CD4-positive, alpha-beta T cell (primary cell): ENCODE measurements at regions of chr2 and their contacts with region 1.

Region 1: DNA sequence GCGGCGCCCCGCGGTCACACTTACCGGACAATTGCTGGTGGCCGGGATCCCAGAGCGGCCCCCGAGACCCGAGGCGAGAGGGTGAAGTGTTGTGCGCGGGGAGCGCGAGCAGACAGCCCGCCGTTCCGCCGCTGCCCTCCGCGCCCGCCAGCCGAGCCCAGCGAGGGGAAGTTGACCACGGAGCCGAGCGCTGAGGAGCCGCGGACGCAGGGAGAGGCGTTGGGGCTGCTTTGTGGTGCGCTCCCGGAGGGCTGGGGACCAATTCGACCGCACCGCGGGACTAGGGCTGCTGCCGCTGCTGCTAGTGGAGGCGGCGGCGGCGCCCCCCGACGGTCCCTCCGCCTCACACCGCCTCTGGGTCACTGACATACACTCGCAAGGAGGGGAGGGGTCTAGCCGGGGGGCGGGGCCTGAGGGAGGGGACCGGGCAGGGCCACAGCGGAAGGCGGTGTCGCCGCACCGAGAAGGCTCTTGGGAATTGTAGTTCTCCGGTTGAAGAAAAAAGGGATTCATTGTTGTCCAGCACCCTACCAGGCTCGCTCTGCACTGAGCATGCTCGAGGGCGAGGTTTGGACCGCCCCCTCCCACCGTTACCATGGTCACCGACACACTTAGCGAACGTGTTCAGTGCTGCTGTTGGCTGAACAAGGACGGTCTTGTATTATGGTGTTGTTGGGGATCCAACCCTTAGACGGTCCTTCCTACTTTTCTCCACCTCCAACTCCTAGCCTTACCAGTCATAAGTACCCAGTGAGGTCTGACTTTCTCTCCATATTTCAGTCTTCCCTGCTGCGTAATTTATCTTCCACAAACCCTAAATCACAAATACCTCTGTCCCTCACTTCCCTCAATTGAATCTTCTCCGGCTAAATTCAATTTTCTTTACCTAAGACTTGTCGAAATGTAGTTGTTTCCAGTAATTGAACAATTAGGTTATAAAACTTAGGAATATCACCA is at the start of gene PELI1:
- DNase-seq: peak; percentile 87 to 99 (median 92)
- ATAC-seq: peak; percentile 91
- H3K4me3 ChIP-seq: peak within 1 kb of the TSS; percentile 77
- H3K4me3 Mint-ChIP-seq: peak within 1 kb of the TSS; percentile 95
- H3K27ac ChIP-seq: peak within 1 kb of the TSS; percentile 64 to 90
- H3K27ac Mint-ChIP-seq: peak within 1 kb of the TSS; percentile 96
- H3K4me1 ChIP-seq: peaks cover 15% of the 10 kb centered on the region
- H3K4me1 Mint-ChIP-seq: peaks cover 36% of the 10 kb centered on the region
- H3K27me3 ChIP-seq: no peaks in the 10 kb centered on the region
- H3K27me3 Mint-ChIP-seq: no peaks in the 10 kb centered on the region
- CTCF ChIP-seq: peak; percentile 13
- total RNA-seq, gene PELI1: 257 to 274 TPM

Region 2: DNA sequence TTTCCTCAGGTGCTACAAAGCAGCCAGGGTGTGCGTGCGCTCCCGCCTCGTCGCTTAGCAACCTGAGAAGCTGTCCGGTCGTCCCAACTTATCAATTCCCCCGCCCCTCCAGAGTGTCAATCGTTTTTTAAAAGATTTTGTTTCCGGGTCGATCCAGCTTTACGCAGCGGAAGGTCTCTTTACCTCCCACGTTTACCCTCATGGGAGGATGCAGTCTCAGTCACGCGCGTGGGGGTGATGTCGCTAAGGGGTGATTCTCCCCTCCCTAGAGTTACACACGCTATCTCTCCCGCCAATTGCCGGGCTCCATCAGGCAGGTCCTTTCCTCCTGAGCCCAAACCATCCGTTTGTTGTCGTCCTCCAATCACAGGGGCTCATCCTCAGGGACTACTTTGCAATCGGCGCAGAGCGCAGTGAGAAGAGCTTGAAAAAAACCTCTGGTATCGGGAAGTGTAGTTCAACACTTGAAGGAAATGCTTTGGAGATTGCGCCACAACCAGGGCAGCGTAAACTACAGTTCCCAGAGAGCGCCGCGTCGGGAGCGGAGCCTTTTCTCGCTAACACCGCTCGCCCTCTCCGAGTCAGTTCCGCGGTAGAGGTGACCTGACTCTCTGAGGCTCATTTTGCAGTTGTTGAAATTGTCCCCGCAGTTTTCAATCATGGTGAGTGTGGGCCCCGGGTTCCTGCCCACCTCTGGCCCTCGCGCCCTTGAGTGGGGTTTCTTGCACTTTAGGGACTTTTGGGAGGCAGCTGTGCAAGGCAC is 555.8 kb before region 1 on chr2 and contains the starts of genes MDH1 and WDPCP:
- CTCF ChIA-PET with region 1: no interaction called
- POLR2A ChIA-PET with region 1: no interaction called
- intact Hi-C with region 1: loop called in 1 of 2 experiments (anchors 5 kb)
- DNase-seq: peak; percentile 86 to 99 (median 88)
- ATAC-seq: peak; percentile 86
- H3K4me3 ChIP-seq: peak within 1 kb of the TSS; percentile 96
- H3K4me3 Mint-ChIP-seq: peak within 1 kb of the TSS; percentile 93
- H3K27ac ChIP-seq: peak within 1 kb of the TSS; percentile 76 to 95
- H3K27ac Mint-ChIP-seq: peak within 1 kb of the TSS; percentile 87
- H3K4me1 ChIP-seq: peaks cover 19% of the 10 kb centered on the region
- H3K4me1 Mint-ChIP-seq: peaks cover 58% of the 10 kb centered on the region
- H3K27me3 ChIP-seq: no peaks in the 10 kb centered on the region
- H3K27me3 Mint-ChIP-seq: no peaks in the 10 kb centered on the region
- CTCF ChIP-seq: no peak
- total RNA-seq, gene MDH1: 96.3 to 97.6 TPM
- total RNA-seq, gene WDPCP: 8.7 to 9.9 TPM

Region 3: GRCh38 chr2:64101141-64101591 is 43.2 kb before region 1 on chr2:
- CTCF ChIA-PET with region 1: interaction called, 6 read pairs
- POLR2A ChIA-PET with region 1: interaction called, 9 read pairs
- intact Hi-C with region 1: loop called (anchors 2 to 5 kb)
- DNase-seq: peak in 3 of 14 experiments; percentile 21 to 63 (median 30)
- ATAC-seq: peak; percentile 49
- H3K4me3 ChIP-seq: no peak overlapping the region
- H3K4me3 Mint-ChIP-seq: peak overlapping the region; percentile 35
- H3K27ac ChIP-seq: peak overlapping the region in 1 of 2 donors; percentile 56
- H3K27ac Mint-ChIP-seq: peak overlapping the region; percentile 69
- H3K4me1 ChIP-seq: peaks cover 9% of the 10 kb centered on the region
- H3K4me1 Mint-ChIP-seq: peaks cover 51% of the 10 kb centered on the region
- H3K27me3 ChIP-seq: no peaks in the 10 kb centered on the region
- H3K27me3 Mint-ChIP-seq: no peaks in the 10 kb centered on the region
- CTCF ChIP-seq: no peak

Region 4: DNA sequence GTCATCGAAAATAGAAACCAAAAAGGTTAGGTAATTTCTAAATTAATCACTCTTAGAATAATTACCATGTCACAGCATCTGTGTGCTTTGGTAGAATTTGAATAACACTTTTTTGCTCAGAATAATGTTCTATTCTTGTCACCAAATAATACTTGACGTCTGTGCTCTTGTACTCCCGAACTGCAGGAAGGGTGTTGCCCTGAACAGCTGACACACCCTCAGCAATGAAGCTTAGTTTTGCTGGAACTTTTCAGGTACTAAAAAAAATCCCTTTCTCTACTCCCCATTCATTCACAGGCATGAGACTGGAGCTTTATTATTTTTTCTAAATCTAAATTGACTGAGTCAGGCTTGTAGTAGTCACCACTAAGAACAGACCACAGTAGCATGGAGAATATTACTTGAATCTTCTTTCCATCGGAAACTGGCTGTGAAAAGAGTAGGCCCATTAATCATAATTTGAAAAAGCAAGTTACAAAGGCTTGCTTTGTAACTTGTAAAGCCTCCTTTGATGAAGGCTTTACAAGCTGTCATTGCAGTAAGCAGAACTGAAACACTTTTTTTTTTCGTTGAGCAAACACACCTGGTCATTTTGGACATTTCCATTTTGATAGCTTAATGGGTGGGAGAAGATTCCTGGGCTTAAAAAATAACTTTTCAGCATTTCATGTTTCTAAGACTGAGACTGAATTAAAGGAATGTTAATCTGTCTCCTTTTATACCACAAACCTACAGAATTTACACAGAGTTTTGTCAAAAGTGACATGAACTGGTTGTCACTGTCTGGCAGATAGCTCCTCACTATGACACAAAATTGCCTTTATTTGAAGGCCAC is 70.2 kb after region 1 on chr2:
- CTCF ChIA-PET with region 1: no interaction called
- POLR2A ChIA-PET with region 1: interaction called, 5 read pairs
- intact Hi-C with region 1: loop called (anchors 2 to 5 kb)
- DNase-seq: peak in 10 of 14 experiments; percentile 17 to 80 (median 42)
- ATAC-seq: peak; percentile 84
- H3K4me3 ChIP-seq: peak overlapping the region; percentile 4
- H3K4me3 Mint-ChIP-seq: peak overlapping the region; percentile 73
- H3K27ac ChIP-seq: peak overlapping the region; percentile 51 to 57
- H3K27ac Mint-ChIP-seq: peak overlapping the region; percentile 86
- H3K4me1 ChIP-seq: peaks cover 25% of the 10 kb centered on the region
- H3K4me1 Mint-ChIP-seq: peaks cover 64% of the 10 kb centered on the region
- H3K27me3 ChIP-seq: no peaks in the 10 kb centered on the region
- H3K27me3 Mint-ChIP-seq: no peaks in the 10 kb centered on the region
- CTCF ChIP-seq: no peak

Region 5: GRCh38 chr2:64283641-64284361 is 139.5 kb after region 1 on chr2:
- CTCF ChIA-PET with region 1: no interaction called
- POLR2A ChIA-PET with region 1: interaction called, 3 read pairs
- intact Hi-C with region 1: loop called in 1 of 2 experiments (anchors 5 kb)
- DNase-seq: peak in 10 of 14 experiments; percentile 7 to 70 (median 32)
- ATAC-seq: peak; percentile 95
- H3K4me3 ChIP-seq: peak overlapping the region; percentile 44
- H3K4me3 Mint-ChIP-seq: no peak overlapping the region
- H3K27ac ChIP-seq: peak overlapping the region; percentile 39 to 53
- H3K27ac Mint-ChIP-seq: no peak overlapping the region
- H3K4me1 ChIP-seq: peaks cover 14% of the 10 kb centered on the region
- H3K4me1 Mint-ChIP-seq: no peaks in the 10 kb centered on the region
- H3K27me3 ChIP-seq: no peaks in the 10 kb centered on the region
- H3K27me3 Mint-ChIP-seq: no peaks in the 10 kb centered on the region
- CTCF ChIP-seq: no peak

Region 6: DNA sequence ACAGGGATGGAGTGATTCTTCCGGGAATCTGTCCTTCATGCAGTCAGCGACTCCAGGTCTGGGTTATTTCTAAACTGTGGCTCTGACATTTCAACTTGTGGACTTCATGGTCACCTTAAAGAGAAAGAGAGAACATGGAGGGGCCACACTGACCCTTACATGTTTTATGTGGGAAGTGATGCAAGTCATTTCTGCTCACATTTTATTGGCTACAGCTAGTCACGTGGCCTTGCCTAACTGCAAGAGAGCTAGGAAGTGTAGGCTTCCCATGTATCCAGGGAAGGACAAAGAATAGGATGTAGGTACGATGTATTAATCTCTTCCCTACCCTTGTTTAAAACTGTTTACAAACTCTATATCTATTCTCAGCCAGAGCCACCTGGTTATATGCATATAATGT is 349.5 kb after region 1 on chr2:
- CTCF ChIA-PET with region 1: no interaction called
- POLR2A ChIA-PET with region 1: no interaction called
- intact Hi-C with region 1: no loop called
- DNase-seq: no peak
- ATAC-seq: no peak
- H3K4me3 ChIP-seq: no peak overlapping the region
- H3K4me3 Mint-ChIP-seq: no peak overlapping the region
- H3K27ac ChIP-seq: no peak overlapping the region
- H3K27ac Mint-ChIP-seq: no peak overlapping the region
- H3K4me1 ChIP-seq: peaks cover 7% of the 10 kb centered on the region
- H3K4me1 Mint-ChIP-seq: peaks cover 5% of the 10 kb centered on the region
- H3K27me3 ChIP-seq: no peaks in the 10 kb centered on the region
- H3K27me3 Mint-ChIP-seq: peaks cover 17% of the 10 kb centered on the region
- CTCF ChIP-seq: no peak

Region 7: GRCh38 chr2:64523666-64524603 is 379.6 kb after region 1 on chr2 and contains the start of gene AFTPH:
- CTCF ChIA-PET with region 1: no interaction called
- POLR2A ChIA-PET with region 1: interaction called, 4 read pairs
- intact Hi-C with region 1: loop called (anchors 10 kb)
- DNase-seq: peak; percentile 98 to 100 (median 99)
- ATAC-seq: peak; percentile 90
- H3K4me3 ChIP-seq: peak within 1 kb of the TSS; percentile 89
- H3K4me3 Mint-ChIP-seq: peak within 1 kb of the TSS; percentile 100
- H3K27ac ChIP-seq: peak within 1 kb of the TSS; percentile 72 to 95
- H3K27ac Mint-ChIP-seq: peak within 1 kb of the TSS; percentile 99
- H3K4me1 ChIP-seq: peaks cover 16% of the 10 kb centered on the region
- H3K4me1 Mint-ChIP-seq: peaks cover 47% of the 10 kb centered on the region
- H3K27me3 ChIP-seq: no peaks in the 10 kb centered on the region
- H3K27me3 Mint-ChIP-seq: no peaks in the 10 kb centered on the region
- CTCF ChIP-seq: no peak
- total RNA-seq, gene AFTPH: 24.2 to 24.3 TPM